Activated CD8-positive, alpha-beta T cell treated with anti-CD3 and anti-CD28 coated beads, Interleukin-2, amount 10 ng/mL, durations not matched to agents 7 days and 5 days (primary cell): ENCODE measurements at regions of chr5 and their contacts with region 1.

Region 1: DNA sequence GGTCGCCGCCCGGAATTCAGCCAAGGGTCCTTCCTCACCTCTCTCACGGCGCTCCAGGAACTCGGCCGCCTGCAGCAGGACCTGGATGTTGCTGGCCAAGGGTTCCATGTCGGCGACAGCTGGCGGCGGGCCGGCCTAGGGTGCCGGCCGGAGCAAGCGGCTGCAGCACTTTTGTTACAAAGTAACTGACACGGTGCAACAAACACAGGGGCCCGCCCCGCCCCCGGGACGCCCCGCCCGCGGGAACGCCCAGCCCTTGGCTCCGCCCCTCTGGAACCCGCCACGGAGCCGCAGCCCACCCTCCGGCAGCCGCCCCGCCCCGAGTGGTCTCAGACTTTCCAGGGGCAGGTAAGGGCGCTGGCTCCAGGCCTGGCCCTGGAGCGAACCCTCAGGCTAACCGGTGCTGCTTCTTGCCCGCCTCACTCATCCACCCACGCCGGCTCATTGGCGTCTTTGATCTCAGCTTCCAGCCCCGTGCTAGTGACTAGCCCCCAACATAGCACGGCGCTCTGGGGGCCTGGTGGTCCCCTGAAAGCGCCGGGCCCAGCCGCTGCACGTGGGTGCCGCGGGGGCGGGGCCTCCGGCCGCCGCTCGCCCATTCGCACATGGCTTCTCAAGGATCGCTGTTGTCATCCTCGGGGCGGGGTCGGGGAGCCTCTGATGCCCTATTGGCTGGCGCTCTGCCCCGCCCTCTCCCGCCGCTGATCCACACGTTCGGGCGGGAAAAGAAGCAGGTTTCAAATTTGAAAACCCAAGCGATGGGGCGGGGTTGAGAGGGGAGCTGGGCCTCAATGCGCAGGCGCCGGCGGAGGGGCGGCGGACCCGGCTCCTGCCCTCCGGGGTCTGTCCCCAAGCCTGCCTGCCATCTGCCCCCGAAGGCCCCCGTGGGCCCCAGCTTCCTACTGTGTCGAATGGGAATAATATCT is at the start of gene MXD3:
- DNase-seq: peak; percentile 99
- ATAC-seq: peak; percentile 87
- H3K4me3 Mint-ChIP-seq: peak within 1 kb of the TSS; percentile 95
- H3K27ac Mint-ChIP-seq: peak within 1 kb of the TSS; percentile 93
- H3K4me1 Mint-ChIP-seq: peaks cover 55% of the 10 kb centered on the region
- H3K27me3 Mint-ChIP-seq: no peaks in the 10 kb centered on the region
- total RNA-seq, gene MXD3: 93.2 to 96.9 TPM

Region 2: GRCh38 chr5:177133091-177133852 is 178.7 kb before region 1 on chr5 and contains the start of gene NSD1:
- CTCF ChIA-PET with region 1: interaction called, 10 read pairs
- POLR2A ChIA-PET with region 1: no interaction called
- DNase-seq: peak; percentile 91
- ATAC-seq: peak; percentile 71
- H3K4me3 Mint-ChIP-seq: peak within 1 kb of the TSS; percentile 92
- H3K27ac Mint-ChIP-seq: peak within 1 kb of the TSS; percentile 89
- H3K4me1 Mint-ChIP-seq: peaks cover 51% of the 10 kb centered on the region
- H3K27me3 Mint-ChIP-seq: no peaks in the 10 kb centered on the region
- total RNA-seq, gene NSD1: 91.8 to 98.4 TPM

Region 3: GRCh38 chr5:177300236-177300880 is 11.6 kb before region 1 on chr5:
- CTCF ChIA-PET with region 1: interaction called, 58 read pairs
- POLR2A ChIA-PET with region 1: interaction called, 11 read pairs
- DNase-seq: peak; percentile 78
- ATAC-seq: peak; percentile 59
- H3K4me3 Mint-ChIP-seq: peak overlapping the region; percentile 75
- H3K27ac Mint-ChIP-seq: peak overlapping the region; percentile 95
- H3K4me1 Mint-ChIP-seq: peaks cover 87% of the 10 kb centered on the region
- H3K27me3 Mint-ChIP-seq: no peaks in the 10 kb centered on the region

Region 4: DNA sequence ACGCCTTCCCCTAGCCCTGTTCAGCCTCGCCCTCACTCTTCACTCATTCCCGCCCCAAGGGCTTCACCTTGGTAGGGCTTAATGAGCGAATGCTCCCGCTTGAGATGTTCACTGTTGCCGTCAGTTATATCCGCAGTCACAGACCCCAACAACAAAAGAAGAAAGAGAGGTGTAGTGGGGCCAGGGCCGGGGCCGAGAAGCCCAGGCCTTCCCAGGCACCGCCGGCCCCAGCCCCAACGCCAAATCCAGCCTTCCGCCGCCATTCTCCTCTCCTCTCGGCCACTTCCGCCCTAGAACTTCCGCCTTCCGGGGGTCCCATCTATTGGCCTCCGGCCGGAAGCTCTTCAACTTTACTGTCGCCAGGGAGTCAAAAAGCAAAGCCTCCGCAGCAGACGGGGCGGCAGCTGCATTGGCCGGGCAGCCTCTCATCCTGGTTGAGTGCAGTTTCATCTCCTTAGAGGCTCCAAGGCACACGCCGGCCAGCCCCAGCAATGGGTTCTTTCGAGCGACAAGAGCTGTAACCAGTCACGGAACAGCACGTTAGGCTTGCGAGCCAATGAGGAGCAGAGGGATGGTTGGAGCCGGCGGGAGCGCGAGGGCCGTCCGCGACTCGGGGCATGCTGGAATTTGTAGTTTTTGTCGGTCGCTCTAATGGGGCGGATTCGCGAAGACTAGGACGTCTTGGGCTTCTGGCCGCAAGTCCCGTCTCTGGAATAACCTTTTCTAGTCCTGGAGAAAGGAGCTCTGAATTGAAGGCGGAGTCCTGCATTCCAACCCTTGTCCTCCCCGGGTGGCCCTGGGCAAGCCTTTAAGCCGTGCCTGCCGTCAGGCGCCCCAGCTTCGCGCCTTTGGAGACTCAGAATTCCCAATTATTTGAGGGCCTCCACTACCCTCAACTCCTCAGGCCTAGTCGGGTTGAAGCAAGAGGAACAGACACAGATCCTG is 39.7 kb after region 1 on chr5 and contains the start of gene LMAN2:
- CTCF ChIA-PET with region 1: interaction called, 31 read pairs
- POLR2A ChIA-PET with region 1: interaction called, 13 read pairs
- DNase-seq: peak; percentile 96
- ATAC-seq: peak; percentile 99
- H3K4me3 Mint-ChIP-seq: peak within 1 kb of the TSS; percentile 97
- H3K27ac Mint-ChIP-seq: peak within 1 kb of the TSS; percentile 100
- H3K4me1 Mint-ChIP-seq: peaks cover 66% of the 10 kb centered on the region
- H3K27me3 Mint-ChIP-seq: no peaks in the 10 kb centered on the region
- total RNA-seq, gene LMAN2: 119 to 127 TPM

Region 5: GRCh38 chr5:177370488-177371119 is 58.6 kb after region 1 on chr5:
- CTCF ChIA-PET with region 1: interaction called, 13 read pairs
- POLR2A ChIA-PET with region 1: interaction called, 5 read pairs
- DNase-seq: peak; percentile 63
- ATAC-seq: peak; percentile 62
- H3K4me3 Mint-ChIP-seq: peak overlapping the region; percentile 31
- H3K27ac Mint-ChIP-seq: no peak overlapping the region
- H3K4me1 Mint-ChIP-seq: peaks cover 70% of the 10 kb centered on the region
- H3K27me3 Mint-ChIP-seq: no peaks in the 10 kb centered on the region